ENCODE measurements at regions of chr7 and their contacts with region 1.

Region 1: GRCh38 chr7:2709553-2710285 is 21.7 kb downstream of the AMZ1 start:
- DNase-seq: peak; percentile 91
- ATAC-seq: peak; percentile 74
- H3K4me3 ChIP-seq: peak overlapping the region in 4 of 5 experiments; percentile 44 to 77 (median 60)
- H3K4me3 Mint-ChIP-seq: peak overlapping the region; percentile 92
- H3K27ac ChIP-seq: peak overlapping the region; percentile 93 to 95
- H3K27ac Mint-ChIP-seq: peak overlapping the region; percentile 97
- H3K4me1 ChIP-seq: peaks cover 30 to 45% of the 10 kb centered on the region in 2 donors
- H3K4me1 Mint-ChIP-seq: peaks cover 47% of the 10 kb centered on the region
- H3K27me3 ChIP-seq: no peaks in the 10 kb centered on the region
- H3K27me3 Mint-ChIP-seq: no peaks in the 10 kb centered on the region
- CTCF ChIP-seq: peak; percentile 94

Region 2: GRCh38 chr7:2471396-2471795 is 238.3 kb before region 1 on chr7:
- CTCF ChIA-PET with region 1: interaction called, 11 read pairs
- POLR2A ChIA-PET with region 1: no interaction called
- intact Hi-C with region 1: no loop called
- DNase-seq: no peak
- ATAC-seq: no peak
- H3K4me3 ChIP-seq: no peak overlapping the region
- H3K4me3 Mint-ChIP-seq: no peak overlapping the region
- H3K27ac ChIP-seq: no peak overlapping the region
- H3K27ac Mint-ChIP-seq: no peak overlapping the region
- H3K4me1 ChIP-seq: peaks cover 0 to 5% of the 10 kb centered on the region in 2 donors
- H3K4me1 Mint-ChIP-seq: peaks cover 4% of the 10 kb centered on the region
- H3K27me3 ChIP-seq: peaks cover 0 to 12% (median 2%) of the 10 kb centered on the region in 4 experiments
- H3K27me3 Mint-ChIP-seq: peaks cover 9% of the 10 kb centered on the region
- CTCF ChIP-seq: no peak

Region 3: DNA sequence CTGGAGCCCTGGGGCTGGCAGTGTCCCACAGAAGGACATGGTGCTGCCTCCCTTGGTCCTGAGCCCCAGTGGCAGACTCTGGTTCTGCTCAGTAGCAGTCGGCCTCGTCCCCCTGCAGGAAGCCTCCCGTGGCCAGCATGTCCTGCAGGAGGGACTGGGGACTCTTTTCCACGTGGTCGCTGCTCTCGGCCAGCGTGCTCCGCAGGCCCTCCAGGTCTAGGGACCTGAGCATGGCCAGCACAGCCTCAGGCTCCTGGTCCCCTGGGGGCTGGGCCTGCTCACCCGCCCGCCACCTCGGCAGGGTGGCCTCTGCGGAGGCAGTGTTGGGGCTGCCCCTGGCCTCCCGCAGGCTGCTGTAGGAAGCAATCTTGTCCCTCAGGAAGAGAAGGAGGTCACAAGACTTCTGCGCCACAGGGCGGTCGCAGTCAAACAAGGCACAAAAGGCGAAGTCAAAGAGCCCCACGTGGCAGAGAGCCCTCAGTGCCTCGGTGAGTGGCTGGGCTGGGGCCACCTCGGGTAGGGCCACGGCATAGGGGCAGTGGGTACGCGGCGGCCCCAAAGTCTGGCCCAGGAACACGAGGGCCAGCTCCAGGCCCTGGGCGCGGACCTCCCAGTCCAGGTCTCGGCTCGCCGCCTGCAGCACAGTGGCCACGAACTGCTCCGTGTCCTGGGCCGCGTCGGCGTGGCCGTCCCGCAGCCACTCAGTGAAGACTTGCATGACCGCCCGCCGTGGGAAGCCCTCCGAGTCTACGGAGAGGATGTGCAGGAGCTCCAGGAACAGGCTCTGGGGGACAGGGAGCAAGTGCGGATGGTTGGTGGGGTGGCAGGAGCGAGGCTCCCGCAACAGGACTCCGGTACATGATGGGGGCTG is 171.5 kb before region 1 on chr7:
- CTCF ChIA-PET with region 1: no interaction called
- POLR2A ChIA-PET with region 1: no interaction called
- intact Hi-C with region 1: no loop called
- DNase-seq: peak; percentile 29
- ATAC-seq: no peak
- H3K4me3 ChIP-seq: no peak overlapping the region
- H3K4me3 Mint-ChIP-seq: no peak overlapping the region
- H3K27ac ChIP-seq: no peak overlapping the region
- H3K27ac Mint-ChIP-seq: no peak overlapping the region
- H3K4me1 ChIP-seq: no peaks in the 10 kb centered on the region
- H3K4me1 Mint-ChIP-seq: peaks cover 1% of the 10 kb centered on the region
- H3K27me3 ChIP-seq: no peaks in the 10 kb centered on the region
- H3K27me3 Mint-ChIP-seq: no peaks in the 10 kb centered on the region
- CTCF ChIP-seq: no peak

Region 4: GRCh38 chr7:2555121-2556052 is 154.3 kb before region 1 on chr7 and contains the start of gene BRAT1:
- CTCF ChIA-PET with region 1: interaction called, 4 read pairs
- POLR2A ChIA-PET with region 1: no interaction called
- intact Hi-C with region 1: loop called (anchors 1 kb)
- DNase-seq: peak; percentile 95
- ATAC-seq: peak; percentile 87
- H3K4me3 ChIP-seq: peak within 1 kb of the TSS; percentile 47 to 87 (median 81)
- H3K4me3 Mint-ChIP-seq: peak within 1 kb of the TSS; percentile 90
- H3K27ac ChIP-seq: peak within 1 kb of the TSS; percentile 96 to 100
- H3K27ac Mint-ChIP-seq: peak within 1 kb of the TSS; percentile 96
- H3K4me1 ChIP-seq: peaks cover 26 to 34% of the 10 kb centered on the region in 2 donors
- H3K4me1 Mint-ChIP-seq: peaks cover 38% of the 10 kb centered on the region
- H3K27me3 ChIP-seq: no peaks in the 10 kb centered on the region
- H3K27me3 Mint-ChIP-seq: no peaks in the 10 kb centered on the region
- CTCF ChIP-seq: peak; percentile 59
- total RNA-seq, gene BRAT1: 36.8 and 40.7 TPM in 2 replicates

Region 5: GRCh38 chr7:2670720-2671391 is 38.9 kb before region 1 on chr7:
- CTCF ChIA-PET with region 1: interaction called, 128 read pairs
- POLR2A ChIA-PET with region 1: interaction called, 4 read pairs
- intact Hi-C with region 1: loop called (anchors 1 kb)
- DNase-seq: peak; percentile 79
- ATAC-seq: peak; percentile 88
- H3K4me3 ChIP-seq: no peak overlapping the region
- H3K4me3 Mint-ChIP-seq: no peak overlapping the region
- H3K27ac ChIP-seq: no peak overlapping the region
- H3K27ac Mint-ChIP-seq: no peak overlapping the region
- H3K4me1 ChIP-seq: peaks cover 6 to 8% of the 10 kb centered on the region in 2 donors
- H3K4me1 Mint-ChIP-seq: peaks cover 6% of the 10 kb centered on the region
- H3K27me3 ChIP-seq: peaks cover 0 to 2% (median 0%) of the 10 kb centered on the region in 4 experiments
- H3K27me3 Mint-ChIP-seq: peaks cover 10% of the 10 kb centered on the region
- CTCF ChIP-seq: peak; percentile 87

Region 6: GRCh38 chr7:2720582-2721491 is 11.1 kb after region 1 on chr7:
- CTCF ChIA-PET with region 1: interaction called, 81 read pairs
- POLR2A ChIA-PET with region 1: interaction called, 16 read pairs
- intact Hi-C with region 1: loop called (anchors 1 kb)
- DNase-seq: peak; percentile 84
- ATAC-seq: peak; percentile 80
- H3K4me3 ChIP-seq: no peak overlapping the region
- H3K4me3 Mint-ChIP-seq: peak overlapping the region; percentile 31
- H3K27ac ChIP-seq: peak overlapping the region; percentile 19 to 50
- H3K27ac Mint-ChIP-seq: peak overlapping the region; percentile 80
- H3K4me1 ChIP-seq: peaks cover 42 to 57% of the 10 kb centered on the region in 2 donors
- H3K4me1 Mint-ChIP-seq: peaks cover 60% of the 10 kb centered on the region
- H3K27me3 ChIP-seq: no peaks in the 10 kb centered on the region
- H3K27me3 Mint-ChIP-seq: no peaks in the 10 kb centered on the region
- CTCF ChIP-seq: no peak

Region 7: GRCh38 chr7:2821161-2821841 is 111.6 kb after region 1 on chr7:
- CTCF ChIA-PET with region 1: interaction called, 4 read pairs
- POLR2A ChIA-PET with region 1: no interaction called
- intact Hi-C with region 1: loop called (anchors 5 kb)
- DNase-seq: peak; percentile 78
- ATAC-seq: peak; percentile 60
- H3K4me3 ChIP-seq: peak overlapping the region in 2 of 5 experiments; percentile 16 to 21
- H3K4me3 Mint-ChIP-seq: peak overlapping the region; percentile 86
- H3K27ac ChIP-seq: peak overlapping the region; percentile 52 to 68
- H3K27ac Mint-ChIP-seq: peak overlapping the region; percentile 87
- H3K4me1 ChIP-seq: peaks cover 49 to 54% of the 10 kb centered on the region in 2 donors
- H3K4me1 Mint-ChIP-seq: peaks cover 72% of the 10 kb centered on the region
- H3K27me3 ChIP-seq: no peaks in the 10 kb centered on the region
- H3K27me3 Mint-ChIP-seq: no peaks in the 10 kb centered on the region
- CTCF ChIP-seq: no peak

Region 8: DNA sequence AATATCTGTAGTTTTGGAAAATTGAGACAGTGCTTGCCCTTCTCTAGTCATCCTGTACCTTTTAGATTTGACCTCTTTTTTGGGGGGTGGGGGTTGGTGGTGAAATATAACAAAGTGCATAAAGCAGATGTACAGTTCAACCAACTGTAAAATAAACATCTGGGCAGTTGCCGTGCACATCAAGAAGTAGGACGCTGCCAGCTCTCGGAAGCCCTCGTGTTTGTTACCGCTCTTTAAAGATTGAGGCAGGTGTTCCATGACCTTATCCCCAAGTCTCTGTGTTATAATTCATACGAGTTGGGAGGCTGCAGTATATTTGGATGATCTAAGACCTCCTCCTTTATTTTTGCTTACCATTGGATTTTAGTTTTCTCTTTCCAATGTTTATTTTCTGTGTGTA is 646.5 kb after region 1 on chr7:
- CTCF ChIA-PET with region 1: no interaction called
- POLR2A ChIA-PET with region 1: no interaction called
- intact Hi-C with region 1: no loop called
- DNase-seq: no peak
- ATAC-seq: no peak
- H3K4me3 ChIP-seq: no peak overlapping the region
- H3K4me3 Mint-ChIP-seq: no peak overlapping the region
- H3K27ac ChIP-seq: no peak overlapping the region
- H3K27ac Mint-ChIP-seq: no peak overlapping the region
- H3K4me1 ChIP-seq: no peaks in the 10 kb centered on the region
- H3K4me1 Mint-ChIP-seq: no peaks in the 10 kb centered on the region
- H3K27me3 ChIP-seq: peaks cover 0 to 6% (median 2%) of the 10 kb centered on the region in 4 experiments
- H3K27me3 Mint-ChIP-seq: peaks cover 14% of the 10 kb centered on the region
- CTCF ChIP-seq: no peak

Region 9: DNA sequence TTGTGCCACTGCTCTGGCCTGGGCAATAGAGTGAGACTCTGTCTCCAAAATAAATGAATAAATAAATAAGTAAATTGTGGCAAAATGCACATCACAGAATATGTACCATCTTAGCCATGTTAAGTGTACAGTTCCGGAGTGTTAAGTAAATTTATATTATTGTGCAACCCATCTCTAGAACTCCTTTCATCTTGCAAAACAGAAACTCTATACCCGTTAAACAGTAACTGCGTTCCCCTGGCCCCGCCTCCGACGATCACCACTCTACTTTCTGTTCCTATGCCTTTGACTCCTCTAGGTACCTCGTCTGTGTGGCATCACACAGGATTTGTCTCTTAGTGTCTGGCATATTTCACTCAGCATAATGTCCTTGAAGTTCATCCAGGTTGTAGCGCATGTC is 1616.0 kb after region 1 on chr7:
- CTCF ChIA-PET with region 1: no interaction called
- POLR2A ChIA-PET with region 1: no interaction called
- intact Hi-C with region 1: no loop called
- DNase-seq: no peak
- ATAC-seq: no peak
- H3K4me3 ChIP-seq: no peak overlapping the region
- H3K4me3 Mint-ChIP-seq: no peak overlapping the region
- H3K27ac ChIP-seq: no peak overlapping the region
- H3K27ac Mint-ChIP-seq: no peak overlapping the region
- H3K4me1 ChIP-seq: no peaks in the 10 kb centered on the region
- H3K4me1 Mint-ChIP-seq: no peaks in the 10 kb centered on the region
- H3K27me3 ChIP-seq: no peaks in the 10 kb centered on the region
- H3K27me3 Mint-ChIP-seq: peaks cover 3% of the 10 kb centered on the region
- CTCF ChIP-seq: no peak

Measured in B cell (primary cell).